Posterior vena cava (tissue), 2 donors: ENCODE measurements at regions of chr1 and their contacts with region 1.

Region 1: DNA sequence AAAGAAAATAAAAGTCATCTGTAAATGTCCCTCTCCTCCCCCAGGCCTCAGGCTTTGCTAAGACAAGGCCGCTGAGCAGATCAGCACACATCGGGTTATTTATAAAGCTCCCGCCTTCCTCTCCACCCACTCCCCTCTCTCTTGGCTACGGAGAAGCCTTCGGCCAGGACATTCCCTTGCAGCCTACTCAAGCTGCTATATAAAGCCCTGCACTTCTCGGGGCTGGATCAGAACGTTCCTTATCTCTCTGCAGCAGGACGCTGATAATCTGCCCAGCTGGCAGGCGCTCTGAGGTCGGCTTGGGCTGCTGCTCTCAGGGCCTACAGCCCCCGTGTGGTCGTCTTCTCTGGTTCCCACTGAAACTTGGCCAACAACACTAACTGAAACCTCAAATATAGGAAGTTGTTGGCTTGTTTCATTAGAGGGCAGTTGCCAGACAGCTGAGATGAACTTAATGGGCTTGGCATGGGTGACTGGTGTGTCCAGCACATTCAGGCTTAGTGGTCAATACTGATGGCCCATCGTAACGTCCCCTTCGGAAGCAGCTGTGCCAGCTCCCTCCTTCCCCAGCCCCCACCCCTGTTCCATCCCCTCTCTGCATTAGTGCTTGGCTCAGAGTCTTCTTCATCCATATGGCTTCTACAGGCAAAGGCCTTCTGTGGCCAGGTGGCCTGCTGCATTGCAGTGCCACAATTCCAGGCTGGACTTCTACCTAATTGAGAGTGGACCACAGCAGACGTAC is 64.6 kb downstream of the IER5 start:
- DNase-seq: peak; percentile 94

Region 2: GRCh38 chr1:180527101-180527669 is 625.9 kb before region 1 on chr1:
- intact Hi-C with region 1: loop called in 1 of 2 experiments (anchors 10 kb)
- DNase-seq: no peak

Region 3: GRCh38 chr1:180881806-180882509 is 271.1 kb before region 1 on chr1:
- intact Hi-C with region 1: loop called in 1 of 2 experiments (anchors 5 kb)
- DNase-seq: no peak

Region 4: DNA sequence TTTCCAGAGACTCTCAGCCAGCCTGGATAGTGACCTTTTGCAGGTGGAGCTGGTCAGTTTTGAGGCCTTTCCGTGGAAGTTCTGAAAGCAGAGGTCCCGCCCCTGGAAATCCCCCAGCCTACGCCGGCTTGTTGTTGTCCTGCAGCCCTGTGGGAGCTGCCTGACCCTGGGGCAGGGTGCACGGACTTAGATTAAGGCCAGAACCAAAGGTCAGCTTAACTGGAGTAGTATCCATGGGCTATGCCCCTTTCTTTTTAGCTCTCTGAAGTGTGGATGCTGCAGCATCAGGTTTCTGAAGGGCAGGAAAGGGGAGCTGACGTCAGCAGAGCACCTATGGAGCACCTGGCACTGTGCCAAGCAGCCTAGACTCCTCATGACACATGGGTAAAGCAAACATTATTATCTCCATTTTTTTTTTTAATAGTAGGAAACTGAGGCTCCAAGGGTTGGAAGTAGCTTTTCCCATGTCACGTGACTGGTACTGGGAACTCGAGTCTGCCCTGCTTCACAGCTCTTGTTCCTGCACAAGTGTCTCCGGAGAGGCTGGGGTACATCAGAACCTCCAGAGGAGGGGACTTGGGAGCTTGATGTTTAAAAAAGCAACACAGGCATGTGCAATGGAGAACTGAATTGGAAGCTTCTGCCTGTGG is 26.0 kb before region 1 on chr1:
- intact Hi-C with region 1: loop called in 1 of 2 experiments (anchors 2 kb)
- DNase-seq: no peak

Region 5: GRCh38 chr1:181219938-181220337 is 66.9 kb after region 1 on chr1:
- intact Hi-C with region 1: no loop called
- DNase-seq: no peak